HepG2 (cell line): ENCODE measurements at regions of chr15 and their contacts with region 1.

Region 1: GRCh38 chr15:66497502-66498455 is at the start of gene SNAPC5:
- DNase-seq: peak; percentile 88
- ATAC-seq: peak; percentile 80
- H3K4me3 ChIP-seq: peak within 1 kb of the TSS; percentile 80 to 93 (median 86)
- H3K27ac ChIP-seq: peak within 1 kb of the TSS; percentile 80
- H3K4me1 ChIP-seq: peaks cover 56% of the 10 kb centered on the region
- H3K27me3 ChIP-seq: no peaks in the 10 kb centered on the region
- CTCF ChIP-seq: peak; percentile 97
- EP300 ChIP-seq: no peak
- POLR2A ChIP-seq: peak; percentile 71 to 81
- RAD21 ChIP-seq: peak; percentile 78
- total RNA-seq, gene SNAPC5: 36.2 and 49.3 TPM in 2 replicates

Region 2: GRCh38 chr15:66269326-66270038 is 228.3 kb before region 1 on chr15:
- CTCF ChIA-PET with region 1: no interaction called
- POLR2A ChIA-PET with region 1: no interaction called
- in situ Hi-C with region 1: no loop called
- intact Hi-C with region 1: no loop called
- DNase-seq: no peak
- ATAC-seq: no peak
- H3K4me3 ChIP-seq: no peak overlapping the region
- H3K27ac ChIP-seq: no peak overlapping the region
- H3K4me1 ChIP-seq: no peaks in the 10 kb centered on the region
- H3K27me3 ChIP-seq: peaks cover 2 to 12% of the 10 kb centered on the region in 2 experiments; a peak in 2 of 5 replicates
- CTCF ChIP-seq: no peak
- EP300 ChIP-seq: no peak
- POLR2A ChIP-seq: no peak
- RAD21 ChIP-seq: no peak

Region 3: DNA sequence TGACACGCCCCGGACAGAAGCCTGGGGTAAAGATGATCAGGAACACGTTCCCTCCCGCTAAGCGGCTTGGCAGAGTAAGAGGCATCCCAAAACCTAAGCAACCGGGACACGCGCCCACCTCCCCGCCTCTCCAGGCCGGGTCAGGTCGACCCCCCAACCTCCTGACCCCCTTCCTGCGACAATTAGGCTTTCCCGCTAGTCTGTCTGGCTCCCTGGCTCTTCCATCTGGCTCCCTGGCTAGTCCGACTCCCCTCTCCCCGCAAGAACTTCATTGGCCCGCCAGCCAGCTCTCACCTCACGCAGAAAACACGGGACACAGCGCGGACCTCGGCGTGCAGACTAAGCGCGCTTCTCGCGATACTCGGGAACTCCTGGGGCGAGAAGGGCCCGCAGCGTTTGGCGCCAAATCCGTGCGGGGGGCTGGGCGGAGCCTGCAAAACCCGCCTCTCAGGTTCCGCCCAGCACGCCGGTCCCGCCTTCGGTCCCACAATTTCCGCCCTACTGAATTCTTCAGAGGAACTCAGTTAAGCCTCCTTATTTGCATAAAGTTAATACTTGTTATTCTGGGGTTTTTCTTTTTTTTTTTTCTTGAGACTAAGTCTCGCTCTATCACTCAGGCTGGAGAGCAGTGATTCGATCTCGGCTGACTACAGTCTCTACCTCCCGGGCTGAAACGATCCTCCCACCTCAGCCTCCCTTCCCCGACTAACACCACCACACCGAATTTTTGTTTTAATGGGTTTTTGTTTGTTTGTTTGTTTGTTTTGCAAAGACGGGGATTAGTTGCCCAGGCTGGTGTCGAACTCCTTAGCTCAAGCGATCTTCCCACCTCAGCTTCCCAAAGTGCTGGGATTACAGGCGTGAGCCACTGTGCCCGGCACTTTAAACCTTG is 141.2 kb before region 1 on chr15 and contains the start of gene TIPIN:
- CTCF ChIA-PET with region 1: no interaction called
- POLR2A ChIA-PET with region 1: no interaction called
- in situ Hi-C with region 1: no loop called
- intact Hi-C with region 1: loop called (anchors 10 kb)
- DNase-seq: peak; percentile 90
- ATAC-seq: peak; percentile 97
- H3K4me3 ChIP-seq: peak within 1 kb of the TSS; percentile 90 to 91 (median 90)
- H3K27ac ChIP-seq: peak within 1 kb of the TSS; percentile 81
- H3K4me1 ChIP-seq: peaks cover 39% of the 10 kb centered on the region
- H3K27me3 ChIP-seq: no peaks in the 10 kb centered on the region; a peak in 2 of 5 replicates
- CTCF ChIP-seq: no peak
- EP300 ChIP-seq: no peak
- POLR2A ChIP-seq: peak; percentile 84 to 91
- RAD21 ChIP-seq: no peak
- total RNA-seq, gene TIPIN: 28.6 and 37.9 TPM in 2 replicates

Region 4: GRCh38 chr15:66369773-66370651 is 127.8 kb before region 1 on chr15:
- CTCF ChIA-PET with region 1: no interaction called
- POLR2A ChIA-PET with region 1: no interaction called
- in situ Hi-C with region 1: loop called (anchors 25 kb)
- intact Hi-C with region 1: loop called (anchors 5 kb)
- DNase-seq: no peak
- ATAC-seq: peak; percentile 63
- H3K4me3 ChIP-seq: peak overlapping the region; percentile 20 to 42 (median 41)
- H3K27ac ChIP-seq: no peak overlapping the region
- H3K4me1 ChIP-seq: peaks cover 36% of the 10 kb centered on the region
- H3K27me3 ChIP-seq: no peaks in the 10 kb centered on the region
- CTCF ChIP-seq: no peak
- EP300 ChIP-seq: no peak
- POLR2A ChIP-seq: no peak
- RAD21 ChIP-seq: no peak